ENCODE measurements at regions of chr9 and their contacts with region 1.

Region 1: DNA sequence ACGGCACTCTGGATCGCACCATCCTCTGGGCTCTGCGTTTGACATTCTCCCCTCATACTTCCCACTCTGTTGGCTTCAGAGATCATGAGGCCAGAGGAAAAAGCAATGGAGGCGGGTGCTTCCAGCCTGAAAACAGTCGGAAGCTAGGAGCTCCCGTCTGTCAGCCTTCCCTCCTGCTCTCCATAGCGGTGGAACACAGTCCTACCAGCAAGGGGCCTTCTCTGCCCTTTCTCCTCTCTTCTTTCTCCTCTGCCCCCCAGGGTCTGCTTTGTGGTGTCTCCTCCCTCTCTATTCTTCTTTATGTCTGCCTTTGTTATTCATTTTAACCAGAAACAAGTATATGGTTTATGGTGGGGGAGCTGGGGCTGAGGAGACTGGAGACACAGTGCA is 152.5 kb upstream of the NFIB start:
- DNase-seq: no peak
- ATAC-seq: no peak
- H3K4me3 ChIP-seq: no peak overlapping the region
- H3K27ac ChIP-seq: no peak overlapping the region
- H3K4me1 ChIP-seq: no peaks in the 10 kb centered on the region
- H3K27me3 ChIP-seq: no peaks in the 10 kb centered on the region
- CTCF ChIP-seq: no peak
- POLR2A ChIP-seq: no peak

Region 2: GRCh38 chr9:14730461-14730898 is 264.1 kb after region 1 on chr9:
- intact Hi-C with region 1: no loop called
- DNase-seq: no peak
- ATAC-seq: no peak
- H3K4me3 ChIP-seq: no peak overlapping the region
- H3K27ac ChIP-seq: no peak overlapping the region
- H3K4me1 ChIP-seq: no peaks in the 10 kb centered on the region
- H3K27me3 ChIP-seq: no peaks in the 10 kb centered on the region
- CTCF ChIP-seq: no peak
- POLR2A ChIP-seq: no peak

Region 3: GRCh38 chr9:14768405-14769229 is 302.2 kb after region 1 on chr9:
- intact Hi-C with region 1: loop called in 6 of 10 experiments (anchors 5 to 10 kb)
- DNase-seq: no peak
- ATAC-seq: peak in 3 of 4 donors; percentile 27 to 52 (median 42)
- H3K4me3 ChIP-seq: no peak overlapping the region
- H3K27ac ChIP-seq: no peak overlapping the region
- H3K4me1 ChIP-seq: peaks cover 0 to 4% (median 0%) of the 10 kb centered on the region in 12 donors
- H3K27me3 ChIP-seq: no peaks in the 10 kb centered on the region
- CTCF ChIP-seq: peak; percentile 64 to 83 (median 69)
- POLR2A ChIP-seq: no peak